ENCODE measurements at regions of chr5 and their contacts with region 1.

Region 1: DNA sequence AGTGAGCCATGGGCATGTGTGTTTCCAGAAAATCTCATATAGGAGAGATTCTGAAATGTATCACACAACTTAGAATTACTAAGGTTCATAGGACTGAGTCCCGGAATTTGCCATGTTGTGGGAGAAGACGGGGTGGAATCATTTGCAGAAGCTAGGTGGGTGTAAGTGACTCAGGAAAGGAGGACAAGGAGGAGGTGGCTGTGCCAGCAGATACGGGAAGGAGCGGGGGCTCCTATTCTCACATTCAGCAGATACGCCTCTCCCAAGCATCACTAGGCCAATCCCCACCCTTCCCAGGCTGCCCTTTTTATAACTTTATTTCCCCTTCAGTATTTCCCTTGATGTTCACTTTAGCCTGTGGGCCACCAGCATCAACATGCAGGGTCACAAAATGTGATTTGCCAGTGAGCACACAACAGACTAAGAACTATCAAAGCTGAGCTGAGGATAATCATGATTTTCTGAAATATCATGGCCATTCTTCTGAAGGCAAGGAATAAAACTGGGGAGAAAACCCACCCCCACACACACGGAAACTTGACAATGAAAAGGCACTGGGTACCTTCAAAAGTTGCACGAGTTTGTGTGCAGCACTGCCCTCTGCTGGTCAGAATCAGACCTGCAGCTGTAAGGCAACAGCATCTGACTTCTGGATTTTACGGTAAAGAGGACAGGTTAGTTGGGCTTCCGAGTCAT is 133.2 kb downstream of the MTX3 start:
- DNase-seq: peak; percentile 58 to 86 (median 77)
- ATAC-seq: peak; percentile 65
- H3K4me3 ChIP-seq: no peak overlapping the region
- H3K4me3 Mint-ChIP-seq: no peak overlapping the region
- H3K27ac ChIP-seq: no peak overlapping the region
- H3K27ac Mint-ChIP-seq: no peak overlapping the region
- H3K4me1 ChIP-seq: no peaks in the 10 kb centered on the region
- H3K4me1 Mint-ChIP-seq: peaks cover 4% of the 10 kb centered on the region
- H3K27me3 ChIP-seq: peaks cover 0 to 3% of the 10 kb centered on the region in 2 experiments
- H3K27me3 Mint-ChIP-seq: peaks cover 6% of the 10 kb centered on the region
- CTCF ChIP-seq: peak; percentile 96

Region 2: GRCh38 chr5:79333852-79334557 is 523.9 kb before region 1 on chr5:
- CTCF ChIA-PET with region 1: no interaction called
- POLR2A ChIA-PET with region 1: no interaction called
- intact Hi-C with region 1: no loop called
- DNase-seq: no peak
- ATAC-seq: no peak
- H3K4me3 ChIP-seq: no peak overlapping the region
- H3K4me3 Mint-ChIP-seq: no peak overlapping the region
- H3K27ac ChIP-seq: no peak overlapping the region
- H3K27ac Mint-ChIP-seq: no peak overlapping the region
- H3K4me1 ChIP-seq: no peaks in the 10 kb centered on the region
- H3K4me1 Mint-ChIP-seq: no peaks in the 10 kb centered on the region
- H3K27me3 ChIP-seq: no peaks in the 10 kb centered on the region
- H3K27me3 Mint-ChIP-seq: peaks cover 7% of the 10 kb centered on the region
- CTCF ChIP-seq: no peak

Region 3: GRCh38 chr5:79702606-79703382 is 155.1 kb before region 1 on chr5:
- CTCF ChIA-PET with region 1: interaction called, 4 read pairs
- POLR2A ChIA-PET with region 1: no interaction called
- intact Hi-C with region 1: loop called (anchors 1 kb)
- DNase-seq: peak in 12 of 14 experiments; percentile 7 to 59 (median 25)
- ATAC-seq: no peak
- H3K4me3 ChIP-seq: no peak overlapping the region
- H3K4me3 Mint-ChIP-seq: no peak overlapping the region
- H3K27ac ChIP-seq: no peak overlapping the region
- H3K27ac Mint-ChIP-seq: no peak overlapping the region
- H3K4me1 ChIP-seq: no peaks in the 10 kb centered on the region
- H3K4me1 Mint-ChIP-seq: peaks cover 13% of the 10 kb centered on the region
- H3K27me3 ChIP-seq: no peaks in the 10 kb centered on the region
- H3K27me3 Mint-ChIP-seq: no peaks in the 10 kb centered on the region
- CTCF ChIP-seq: peak; percentile 63

Region 4: DNA sequence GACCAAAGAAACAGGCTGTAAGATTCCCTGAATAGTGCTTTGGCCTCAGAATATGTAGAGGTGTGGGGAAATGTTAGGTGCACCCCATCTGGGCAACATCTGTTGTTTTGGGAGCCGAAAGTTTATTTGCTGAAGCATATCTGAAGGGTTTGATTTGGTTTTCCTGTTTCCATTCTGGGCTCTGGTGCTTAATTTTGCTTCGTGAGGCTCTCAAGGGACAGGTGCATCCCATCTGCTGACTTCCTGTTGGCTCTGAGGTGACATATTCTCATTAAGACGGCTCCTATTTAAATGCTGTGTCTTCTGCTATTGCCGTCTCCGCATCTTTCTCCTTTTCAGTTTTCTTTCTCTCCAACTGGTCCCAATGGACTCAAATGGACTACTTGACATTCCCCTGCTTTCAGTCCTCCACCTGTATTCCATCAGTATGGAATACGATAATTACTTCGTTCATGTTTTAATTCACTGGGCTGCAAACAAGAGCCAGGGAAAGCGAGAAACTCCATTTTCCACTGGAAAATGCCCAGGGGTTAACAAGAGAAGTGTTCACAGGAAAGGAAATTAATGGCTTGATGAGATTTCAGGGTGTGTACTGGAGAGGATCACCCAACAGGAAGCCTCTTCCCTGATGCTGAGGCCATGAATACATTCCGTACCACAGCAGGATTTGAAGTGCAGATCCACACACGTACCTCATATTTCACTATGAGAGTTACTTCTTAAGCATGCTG is 29.2 kb after region 1 on chr5:
- CTCF ChIA-PET with region 1: no interaction called
- POLR2A ChIA-PET with region 1: no interaction called
- intact Hi-C with region 1: no loop called
- DNase-seq: no peak
- ATAC-seq: no peak
- H3K4me3 ChIP-seq: no peak overlapping the region
- H3K4me3 Mint-ChIP-seq: no peak overlapping the region
- H3K27ac ChIP-seq: no peak overlapping the region
- H3K27ac Mint-ChIP-seq: no peak overlapping the region
- H3K4me1 ChIP-seq: no peaks in the 10 kb centered on the region
- H3K4me1 Mint-ChIP-seq: no peaks in the 10 kb centered on the region
- H3K27me3 ChIP-seq: no peaks in the 10 kb centered on the region
- H3K27me3 Mint-ChIP-seq: peaks cover under 1% of the 10 kb centered on the region
- CTCF ChIP-seq: no peak

Region 5: GRCh38 chr5:81315336-81315735 is 1457.5 kb after region 1 on chr5:
- CTCF ChIA-PET with region 1: no interaction called
- POLR2A ChIA-PET with region 1: no interaction called
- intact Hi-C with region 1: no loop called
- DNase-seq: no peak
- ATAC-seq: no peak
- H3K4me3 ChIP-seq: no peak overlapping the region
- H3K4me3 Mint-ChIP-seq: no peak overlapping the region
- H3K27ac ChIP-seq: no peak overlapping the region
- H3K27ac Mint-ChIP-seq: no peak overlapping the region
- H3K4me1 ChIP-seq: no peaks in the 10 kb centered on the region
- H3K4me1 Mint-ChIP-seq: no peaks in the 10 kb centered on the region
- H3K27me3 ChIP-seq: no peaks in the 10 kb centered on the region
- H3K27me3 Mint-ChIP-seq: no peaks in the 10 kb centered on the region
- CTCF ChIP-seq: no peak

Measured in CD4-positive, alpha-beta T cell (primary cell).